ENCODE measurements at regions of chr18 and their contacts with region 1.

Region 1: GRCh38 chr18:34912010-34912721 is 129.0 kb upstream of the MAPRE2 start:
- DNase-seq: no peak
- ATAC-seq: no peak
- H3K4me3 ChIP-seq: no peak overlapping the region
- H3K27ac ChIP-seq: no peak overlapping the region
- H3K4me1 ChIP-seq: no peaks in the 10 kb centered on the region
- H3K27me3 ChIP-seq: no peaks in the 10 kb centered on the region

Region 2: DNA sequence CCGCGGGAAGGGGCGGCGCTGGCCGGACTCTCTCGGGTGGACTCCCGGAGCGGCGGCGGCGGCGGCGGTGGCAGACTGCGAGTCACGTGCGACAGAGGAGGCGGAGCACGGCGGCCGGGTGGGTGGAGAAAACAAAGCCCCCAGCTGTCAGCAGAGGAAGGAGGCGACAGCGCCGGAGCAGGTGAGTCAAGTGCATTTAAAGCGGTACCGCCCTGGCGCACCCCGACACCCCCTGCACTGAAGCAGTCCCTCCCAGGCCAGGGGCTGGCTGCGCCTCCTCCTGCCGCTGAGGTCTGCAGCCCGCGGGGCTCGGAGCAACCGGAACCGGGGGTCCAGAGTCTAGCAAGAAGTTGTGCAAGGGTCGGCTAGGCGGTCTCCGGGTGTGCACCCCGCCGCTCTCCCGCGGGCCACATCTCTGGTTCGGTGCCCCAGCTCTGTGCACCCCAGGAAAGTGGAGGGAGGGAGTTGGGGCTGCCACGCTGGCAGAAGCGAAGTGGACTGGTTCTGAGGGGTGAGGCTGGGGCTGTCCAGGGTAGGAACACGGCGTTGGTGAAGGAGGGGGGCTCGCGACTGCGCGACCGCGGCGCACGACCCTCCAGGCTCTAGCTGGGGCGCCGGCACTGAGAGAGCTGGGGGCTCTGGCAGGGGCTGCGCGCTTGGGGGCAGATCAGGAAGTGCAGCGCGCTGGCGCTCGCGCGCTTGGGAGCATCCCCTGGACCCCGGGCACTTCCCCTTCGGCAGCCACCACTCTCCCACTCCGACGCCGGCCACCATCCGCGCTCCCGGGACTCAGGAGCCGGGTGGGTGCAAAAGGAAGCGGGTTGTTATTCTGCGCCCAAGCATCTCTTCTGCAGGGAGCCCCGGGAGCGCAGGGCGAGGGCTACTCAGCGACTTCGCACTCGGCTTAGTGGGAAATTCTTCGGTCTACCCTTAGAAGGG is 65.0 kb after region 1 on chr18:
- intact Hi-C with region 1: loop called in 1 of 4 experiments (anchors 10 kb)
- DNase-seq: peak; percentile 77 to 90 (median 90)
- ATAC-seq: peak; percentile 81 to 84
- H3K4me3 ChIP-seq: peak overlapping the region; percentile 79
- H3K27ac ChIP-seq: no peak overlapping the region
- H3K4me1 ChIP-seq: no peaks in the 10 kb centered on the region
- H3K27me3 ChIP-seq: no peaks in the 10 kb centered on the region

Measured in right cardiac atrium (tissue), 5 donors.